ENCODE measurements at regions of chr12 and their contacts with region 1.

Region 1: DNA sequence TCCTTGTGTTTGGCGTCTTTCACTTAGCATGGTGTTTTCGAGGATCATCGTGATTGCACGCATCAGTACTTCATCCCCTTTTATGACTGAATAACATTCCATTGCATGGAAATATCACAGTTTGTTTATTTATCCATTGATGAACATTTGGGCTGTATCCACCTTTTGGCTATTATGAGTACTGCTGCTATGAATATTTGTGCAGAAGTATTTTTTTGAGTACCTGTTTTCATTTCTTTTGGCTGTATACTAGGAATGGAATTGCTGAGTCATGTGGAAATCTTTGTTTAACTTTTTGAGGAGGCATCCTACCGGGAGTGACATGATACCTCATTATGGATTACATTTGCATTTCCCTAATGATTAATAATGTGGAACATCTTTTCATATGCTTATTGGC is 66.4 kb downstream of the WNK1 start:
- DNase-seq: no peak
- H3K4me3 ChIP-seq: no peak overlapping the region
- CTCF ChIP-seq: no peak

Region 2: DNA sequence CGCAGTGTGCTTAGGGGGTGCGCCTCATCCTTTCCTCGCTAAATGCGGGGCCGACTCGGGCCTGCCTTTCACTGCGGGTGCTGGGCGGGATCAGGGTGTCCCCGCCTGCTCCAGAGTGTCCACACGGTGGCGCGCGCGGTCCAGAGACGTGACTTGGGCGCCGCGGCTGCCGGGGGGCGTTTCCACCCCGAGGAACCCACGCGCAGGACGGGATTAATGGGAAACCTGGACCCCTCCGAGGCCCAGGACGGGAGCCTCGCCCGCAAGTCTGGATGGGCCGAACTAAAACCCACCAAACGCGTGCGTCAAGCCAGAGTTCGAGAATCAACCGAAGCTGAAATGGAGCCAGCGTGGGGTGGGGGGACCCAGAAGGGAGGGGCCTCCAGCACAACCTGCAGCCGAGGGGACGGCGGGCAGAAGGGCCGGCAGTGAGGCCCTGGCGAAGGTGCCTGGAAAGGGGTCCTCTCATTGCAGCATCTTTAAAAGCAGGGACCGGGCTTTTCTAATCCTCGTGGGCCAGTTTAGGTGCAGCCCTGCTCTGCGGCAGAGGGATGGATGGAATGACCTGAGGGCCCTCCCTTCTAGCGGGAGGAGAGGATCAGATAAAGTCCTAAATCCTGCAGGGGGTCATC is 248.8 kb before region 1 on chr12:
- in situ Hi-C with region 1: loop called (anchors 5 kb)
- DNase-seq: peak; percentile 48
- H3K4me3 ChIP-seq: peak overlapping the region; percentile 47
- CTCF ChIP-seq: peak; percentile 83

Region 3: GRCh38 chr12:712172-712863 is 106.4 kb before region 1 on chr12:
- in situ Hi-C with region 1: no loop called
- DNase-seq: no peak
- H3K4me3 ChIP-seq: no peak overlapping the region
- CTCF ChIP-seq: no peak

Region 4: DNA sequence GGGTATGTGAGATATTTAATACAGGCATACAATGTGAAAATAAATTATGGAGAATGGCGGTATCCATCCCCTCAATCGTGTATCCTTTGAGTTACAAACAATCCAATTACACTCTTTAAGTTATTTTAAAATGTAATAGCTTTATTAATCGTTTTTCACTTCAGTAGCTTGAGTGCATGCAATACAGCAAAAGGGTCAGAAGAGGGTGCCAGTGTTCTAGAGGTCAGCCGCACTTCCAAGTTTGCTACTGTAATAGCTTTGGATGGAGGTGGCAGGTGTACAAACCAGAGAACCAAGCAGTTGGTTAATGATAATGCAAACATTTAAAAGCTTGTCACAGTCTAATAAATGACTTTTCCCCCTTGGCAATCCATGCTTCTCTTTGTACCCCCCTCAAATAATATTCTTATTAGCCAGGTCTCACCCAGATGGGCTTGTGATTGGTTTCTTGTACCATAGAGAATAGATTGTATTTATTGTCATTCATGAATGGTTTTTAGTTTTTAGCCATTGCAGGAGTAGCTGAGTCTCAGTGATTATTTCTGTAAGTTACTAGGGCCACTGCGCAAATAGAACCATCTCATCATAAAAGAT is 299.3 kb after region 1 on chr12:
- in situ Hi-C with region 1: no loop called
- DNase-seq: peak; percentile 80
- H3K4me3 ChIP-seq: no peak overlapping the region
- CTCF ChIP-seq: peak; percentile 86

Measured in astrocyte of the cerebellum (primary cell).